Activated T-helper 2 cell treated with anti-CD3 and anti-CD28 coated beads, Interferon-gamma antibody, Interleukin-2, Interleukin-4, amounts not matched to agents 10 μg/mL and 5 μg/mL and 100 μg/mL, durations not matched to agents 14 hours and 24 hours and 36 hours (primary cell): ENCODE measurements at regions of chr2 and their contacts with region 1.

Region 1: GRCh38 chr2:28452534-28453081 is 43.3 kb upstream of the PLB1 start:
- DNase-seq: peak; percentile 65
- H3K4me3 Mint-ChIP-seq: no peak overlapping the region
- H3K27ac Mint-ChIP-seq: peak overlapping the region; percentile 30
- H3K4me1 Mint-ChIP-seq: peaks cover 48% of the 10 kb centered on the region
- H3K27me3 Mint-ChIP-seq: no peaks in the 10 kb centered on the region

Region 2: GRCh38 chr2:27754138-27754588 is 698.4 kb before region 1 on chr2:
- intact Hi-C with region 1: loop called (anchors 1 kb)
- DNase-seq: peak; percentile 57
- H3K4me3 Mint-ChIP-seq: no peak overlapping the region
- H3K27ac Mint-ChIP-seq: no peak overlapping the region
- H3K4me1 Mint-ChIP-seq: peaks cover 2% of the 10 kb centered on the region
- H3K27me3 Mint-ChIP-seq: peaks cover 2% of the 10 kb centered on the region

Region 3: DNA sequence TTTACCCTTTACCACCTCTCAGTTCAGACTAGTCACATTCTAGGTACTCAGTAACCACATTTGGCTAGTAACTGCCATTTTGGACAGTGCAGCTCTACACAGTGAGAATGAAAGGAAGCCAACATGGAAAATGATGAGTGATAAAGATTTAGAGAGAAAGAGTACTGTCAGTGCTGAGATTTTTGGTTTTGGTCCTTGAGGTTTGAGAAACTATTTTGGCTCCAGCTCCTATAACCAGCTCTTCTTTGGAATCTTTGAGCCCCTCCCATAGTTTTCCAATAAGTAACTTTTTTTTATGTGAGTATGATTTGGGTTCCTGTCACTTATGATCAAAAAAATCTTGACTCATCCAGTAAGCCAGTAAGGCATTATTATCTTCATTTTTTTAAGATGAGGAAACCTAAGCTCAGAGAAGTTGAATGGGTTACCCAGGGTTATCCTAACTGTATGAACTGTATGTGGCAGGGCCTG is 389.1 kb before region 1 on chr2:
- intact Hi-C with region 1: no loop called
- DNase-seq: no peak
- H3K4me3 Mint-ChIP-seq: no peak overlapping the region
- H3K27ac Mint-ChIP-seq: no peak overlapping the region
- H3K4me1 Mint-ChIP-seq: peaks cover 11% of the 10 kb centered on the region
- H3K27me3 Mint-ChIP-seq: no peaks in the 10 kb centered on the region